ENCODE measurements at regions of chr5 and their contacts with region 1.

Region 1: DNA sequence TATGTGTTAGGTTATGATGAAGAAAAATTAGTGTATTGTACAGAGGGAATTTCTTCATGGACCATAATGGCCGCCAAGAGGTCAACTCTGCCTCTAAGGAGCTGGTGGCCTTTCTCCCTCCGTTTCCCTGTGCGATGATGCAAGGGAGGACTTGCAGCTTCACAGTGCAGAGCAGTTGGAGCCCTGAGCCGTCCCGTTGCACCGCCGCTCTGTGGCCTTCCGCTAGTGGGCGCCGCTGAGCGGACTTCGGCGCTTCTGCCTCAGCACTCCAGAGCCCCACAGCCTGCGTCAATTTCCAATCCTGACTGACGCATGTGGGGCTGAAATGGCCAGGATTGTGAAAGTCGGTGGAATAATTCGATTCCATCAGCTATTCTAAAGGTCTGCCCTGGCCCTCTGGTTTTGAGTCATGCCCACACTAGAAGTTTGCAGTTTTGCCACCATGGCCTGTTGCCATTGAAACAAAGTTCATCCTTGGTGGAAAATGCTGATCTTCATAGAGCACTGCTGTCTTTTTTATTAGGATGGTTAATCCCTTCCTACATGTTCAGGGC is 22.7 kb upstream of the LECT2 start:
- DNase-seq: peak; percentile 81
- ATAC-seq: peak; percentile 88

Region 2: GRCh38 chr5:136028782-136029742 is 51.6 kb after region 1 on chr5 and contains the start of gene TGFBI:
- intact Hi-C with region 1: loop called (anchors 5 kb)
- DNase-seq: peak; percentile 91
- ATAC-seq: peak; percentile 88
- total RNA-seq, gene TGFBI: 66.5 TPM

Region 3: GRCh38 chr5:136062366-136063274 is 85.2 kb after region 1 on chr5:
- intact Hi-C with region 1: loop called (anchors 5 kb)
- DNase-seq: no peak
- ATAC-seq: no peak

Region 4: GRCh38 chr5:136080483-136081216 is 103.2 kb after region 1 on chr5:
- intact Hi-C with region 1: loop called (anchors 5 kb)
- DNase-seq: peak; percentile 95
- ATAC-seq: peak; percentile 96

Region 5: DNA sequence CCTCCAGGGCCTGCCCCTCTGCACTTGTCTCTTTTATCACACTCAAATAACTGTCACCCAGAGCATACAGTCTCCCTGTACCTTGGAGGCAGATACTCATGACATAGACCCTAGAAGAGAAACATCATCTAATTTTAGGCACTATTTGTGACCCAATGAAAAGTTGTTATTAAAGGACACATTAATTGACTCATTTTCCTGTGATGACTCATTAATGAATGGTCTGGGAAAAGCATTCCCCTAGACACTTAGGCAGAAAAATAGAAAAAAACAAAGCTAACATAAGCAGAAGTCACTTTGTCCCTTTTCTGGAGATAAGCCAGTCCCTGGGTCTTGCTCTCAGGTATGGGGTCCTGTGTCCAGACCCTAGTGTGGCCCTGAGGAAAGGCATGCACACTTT is 372.9 kb after region 1 on chr5:
- intact Hi-C with region 1: no loop called
- DNase-seq: no peak
- ATAC-seq: no peak